Activated T-helper 1 cell treated with anti-CD3 and anti-CD28 coated beads, Interleukin-12 subunit alpha, Interleukin-12 subunit beta, Interleukin-2, Interleukin-4 antibody, amounts not matched to agents 30 ng/mL and 10 ng/mL and 1 ng/mL, durations not matched to agents 14 hours and 24 hours and 36 hours (primary cell): ENCODE measurements at regions of chr1 and their contacts with region 1.

Region 1: GRCh38 chr1:220089650-220090556 is at the start of gene BPNT1:
- DNase-seq: peak; percentile 95
- H3K4me3 Mint-ChIP-seq: peak within 1 kb of the TSS; percentile 96
- H3K27ac Mint-ChIP-seq: peak within 1 kb of the TSS; percentile 87
- H3K4me1 Mint-ChIP-seq: peaks cover 8% of the 10 kb centered on the region
- H3K27me3 Mint-ChIP-seq: no peaks in the 10 kb centered on the region
- total RNA-seq, gene BPNT1: 27.0 and 28.2 TPM in 2 replicates

Region 2: GRCh38 chr1:218284934-218285635 is 1804.8 kb before region 1 on chr1 and contains the start of gene RRP15:
- intact Hi-C with region 1: loop called (anchors 5 kb)
- DNase-seq: peak; percentile 82
- H3K4me3 Mint-ChIP-seq: peak within 1 kb of the TSS; percentile 95
- H3K27ac Mint-ChIP-seq: peak within 1 kb of the TSS; percentile 98
- H3K4me1 Mint-ChIP-seq: peaks cover 37% of the 10 kb centered on the region
- H3K27me3 Mint-ChIP-seq: peaks cover 6% of the 10 kb centered on the region
- total RNA-seq, gene RRP15: 42.2 and 50.1 TPM in 2 replicates

Region 3: DNA sequence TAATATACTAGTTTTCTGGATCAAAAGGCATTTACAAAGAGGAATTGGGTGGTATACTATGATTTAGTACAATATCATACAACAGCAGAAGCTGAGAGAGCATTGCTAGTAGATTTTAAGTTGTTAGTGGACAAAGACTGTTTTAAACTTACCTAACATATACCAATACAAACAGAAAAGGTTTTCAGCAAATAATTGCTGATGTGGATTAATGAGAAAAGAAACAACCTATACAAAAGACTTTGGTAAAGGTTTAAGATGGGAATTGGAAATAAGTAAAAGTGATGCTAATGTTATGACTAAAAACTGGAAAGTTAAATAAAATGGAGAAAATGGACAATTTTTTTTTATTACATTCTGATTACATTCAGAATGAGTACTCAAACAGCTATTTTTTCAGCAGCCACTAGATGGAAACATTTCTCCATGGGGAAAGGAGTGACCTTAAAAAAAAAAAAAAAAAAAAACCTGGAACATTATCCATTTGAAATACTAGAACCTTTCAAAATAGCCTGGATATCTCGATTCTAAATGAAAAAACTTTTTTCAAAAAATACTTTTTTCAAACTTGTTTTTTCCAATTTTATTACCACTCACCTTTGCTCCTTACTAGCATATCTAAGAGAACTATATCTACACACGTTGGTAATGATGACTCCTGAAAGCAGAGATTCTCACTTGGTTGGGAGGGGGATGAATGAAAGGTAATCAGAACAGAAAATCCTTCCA is 99.0 kb before region 1 on chr1:
- intact Hi-C with region 1: loop called (anchors 2 kb)
- DNase-seq: no peak
- H3K4me3 Mint-ChIP-seq: no peak overlapping the region
- H3K27ac Mint-ChIP-seq: no peak overlapping the region
- H3K4me1 Mint-ChIP-seq: peaks cover 5% of the 10 kb centered on the region
- H3K27me3 Mint-ChIP-seq: no peaks in the 10 kb centered on the region

Region 4: GRCh38 chr1:220046052-220046930 is 43.6 kb before region 1 on chr1 and contains the start of gene EPRS1:
- intact Hi-C with region 1: loop called (anchors 1 kb)
- DNase-seq: peak; percentile 95
- H3K4me3 Mint-ChIP-seq: peak within 1 kb of the TSS; percentile 96
- H3K27ac Mint-ChIP-seq: peak within 1 kb of the TSS; percentile 93
- H3K4me1 Mint-ChIP-seq: peaks cover 32% of the 10 kb centered on the region
- H3K27me3 Mint-ChIP-seq: no peaks in the 10 kb centered on the region
- total RNA-seq, gene EPRS1: 176 and 188 TPM in 2 replicates

Region 5: GRCh38 chr1:220113136-220113695 is 23.3 kb after region 1 on chr1:
- intact Hi-C with region 1: loop called (anchors 1 kb)
- DNase-seq: no peak
- H3K4me3 Mint-ChIP-seq: no peak overlapping the region
- H3K27ac Mint-ChIP-seq: peak overlapping the region; percentile 55
- H3K4me1 Mint-ChIP-seq: peaks cover 4% of the 10 kb centered on the region
- H3K27me3 Mint-ChIP-seq: no peaks in the 10 kb centered on the region

Region 6: GRCh38 chr1:220272047-220272840 is 182.3 kb after region 1 on chr1 and contains the start of gene RAB3GAP2:
- intact Hi-C with region 1: loop called (anchors 1 kb)
- DNase-seq: peak; percentile 97
- H3K4me3 Mint-ChIP-seq: no peak within 1 kb of the TSS
- H3K27ac Mint-ChIP-seq: no peak within 1 kb of the TSS
- H3K4me1 Mint-ChIP-seq: peaks cover 15% of the 10 kb centered on the region
- H3K27me3 Mint-ChIP-seq: peaks cover 9% of the 10 kb centered on the region
- total RNA-seq, gene RAB3GAP2: 51.4 and 56.8 TPM in 2 replicates